ENCODE measurements at regions of chr3 and their contacts with region 1.

Region 1: GRCh38 chr3:113495035-113495434 is 19.9 kb downstream of the SPICE1 start:
- H3K4me3 ChIP-seq: no peak overlapping the region
- H3K27ac ChIP-seq: no peak overlapping the region
- H3K4me1 ChIP-seq: no peaks in the 10 kb centered on the region
- CTCF ChIP-seq: no peak

Region 2: GRCh38 chr3:113514265-113514769 is 19.3 kb after region 1 on chr3:
- CTCF ChIA-PET with region 1: interaction called, 9 read pairs
- POLR2A ChIA-PET with region 1: interaction called, 11 read pairs
- H3K4me3 ChIP-seq: peak overlapping the region; percentile 96
- H3K27ac ChIP-seq: peak overlapping the region; percentile 68
- H3K4me1 ChIP-seq: 0 out of 2 replicates have a peak, but pooled peaks cover 2% of the 10 kb centered on the region
- CTCF ChIP-seq: no peak

Region 3: GRCh38 chr3:113575206-113575605 is 80.2 kb after region 1 on chr3:
- CTCF ChIA-PET with region 1: interaction called, 40 read pairs
- POLR2A ChIA-PET with region 1: no interaction called
- H3K4me3 ChIP-seq: no peak overlapping the region
- H3K27ac ChIP-seq: no peak overlapping the region
- H3K4me1 ChIP-seq: no peaks in the 10 kb centered on the region
- CTCF ChIP-seq: no peak

Region 4: DNA sequence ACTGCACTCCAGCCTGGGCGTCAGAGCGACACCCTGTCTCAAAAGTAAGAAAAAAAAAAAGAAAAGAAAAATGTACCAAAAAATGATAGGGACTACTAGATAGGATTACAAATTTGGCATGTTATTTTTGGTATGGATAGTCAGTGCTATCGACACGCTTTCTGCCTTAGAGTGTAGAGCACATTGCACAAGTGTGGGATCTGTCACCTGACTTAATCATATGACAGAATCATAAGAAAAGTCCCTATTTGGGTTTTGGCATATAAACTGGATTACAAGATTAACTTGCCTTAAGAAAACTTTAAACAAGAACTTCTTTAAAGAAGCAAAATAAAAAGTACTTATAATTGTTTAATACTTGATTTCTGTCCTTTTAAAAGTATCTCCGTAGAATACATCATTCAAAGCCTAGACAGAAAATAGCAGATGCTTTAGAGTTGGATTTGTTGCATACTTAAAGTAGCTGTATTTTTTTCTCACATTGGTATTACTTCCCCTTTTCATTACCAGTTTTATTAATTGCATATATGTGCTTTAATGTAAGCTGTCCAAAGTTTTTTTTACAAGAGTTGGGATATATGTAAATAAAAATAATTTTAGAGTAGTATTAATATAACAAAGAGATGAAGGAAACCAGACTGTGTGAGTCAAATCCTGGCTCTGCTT is 259.6 kb after region 1 on chr3:
- CTCF ChIA-PET with region 1: no interaction called
- POLR2A ChIA-PET with region 1: no interaction called
- H3K4me3 ChIP-seq: no peak overlapping the region
- H3K27ac ChIP-seq: no peak overlapping the region
- H3K4me1 ChIP-seq: no peaks in the 10 kb centered on the region
- CTCF ChIP-seq: no peak